Activated CD4-positive, alpha-beta T cell treated with anti-CD3 and anti-CD28 coated beads for 36 hours (primary cell): ENCODE measurements at regions of chr10 and their contacts with region 1.

Region 1: DNA sequence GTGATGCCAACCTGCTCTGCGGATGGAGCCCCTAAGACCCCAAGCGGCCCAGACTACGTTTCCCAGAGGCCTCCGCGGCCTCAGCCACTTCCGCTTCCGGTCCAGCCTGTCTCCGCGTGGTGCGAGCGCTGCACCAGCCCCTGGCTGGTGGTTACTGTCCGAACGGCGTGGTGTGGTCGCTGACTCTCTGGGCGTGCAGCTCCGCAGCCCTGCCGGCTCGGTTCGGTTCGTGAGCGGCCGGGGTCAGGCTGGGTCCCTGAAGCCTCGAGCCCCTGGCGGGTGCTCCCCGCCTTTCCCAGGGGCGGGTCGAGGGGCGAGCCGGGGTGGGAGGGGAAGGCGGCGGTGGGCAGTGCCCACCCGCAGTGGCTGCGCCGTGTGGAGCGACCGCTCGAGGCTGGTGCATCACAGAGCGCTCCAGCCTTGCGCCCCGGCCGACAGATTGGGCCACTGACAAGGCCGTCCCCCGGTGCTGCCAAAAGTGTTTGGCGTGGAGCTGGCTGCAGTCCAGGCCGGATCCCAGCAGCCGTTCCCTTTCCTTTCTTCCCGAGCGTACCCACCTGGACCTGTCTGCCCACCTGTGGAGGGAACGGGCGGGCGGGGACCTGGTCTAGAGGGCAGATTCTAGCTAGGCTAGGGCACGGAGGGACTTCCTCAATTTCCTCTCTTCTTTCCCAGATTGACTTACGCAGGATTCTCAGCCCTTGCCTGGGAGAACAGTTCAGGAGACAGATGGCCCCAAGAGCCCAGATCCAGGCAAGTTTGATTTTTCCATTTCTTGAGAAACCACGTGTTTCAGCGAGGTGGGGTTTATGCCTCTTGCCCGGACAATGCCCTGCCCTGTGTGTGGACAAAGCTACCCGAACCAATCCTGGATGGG is at the start of gene ZNF485:
- DNase-seq: peak; percentile 80
- ATAC-seq: peak; percentile 91
- H3K4me3 Mint-ChIP-seq: peak within 1 kb of the TSS; percentile 81
- H3K27ac Mint-ChIP-seq: peak within 1 kb of the TSS; percentile 82
- H3K4me1 Mint-ChIP-seq: peaks cover 40% of the 10 kb centered on the region
- H3K27me3 Mint-ChIP-seq: no peaks in the 10 kb centered on the region
- total RNA-seq, gene ZNF485: 6.9 to 7.6 TPM

Region 2: GRCh38 chr10:43594944-43595589 is 11.5 kb before region 1 on chr10:
- CTCF ChIA-PET with region 1: interaction called, 7 read pairs
- POLR2A ChIA-PET with region 1: no interaction called
- intact Hi-C with region 1: loop called in 1 of 2 experiments (anchors 1 kb)
- DNase-seq: peak; percentile 69
- ATAC-seq: peak; percentile 80
- H3K4me3 Mint-ChIP-seq: peak overlapping the region; percentile 42
- H3K27ac Mint-ChIP-seq: peak overlapping the region; percentile 76
- H3K4me1 Mint-ChIP-seq: peaks cover 26% of the 10 kb centered on the region
- H3K27me3 Mint-ChIP-seq: peaks cover 5% of the 10 kb centered on the region

Region 3: GRCh38 chr10:43623351-43623750 is 16.8 kb after region 1 on chr10:
- CTCF ChIA-PET with region 1: no interaction called
- POLR2A ChIA-PET with region 1: no interaction called
- intact Hi-C with region 1: no loop called
- DNase-seq: no peak
- ATAC-seq: no peak
- H3K4me3 Mint-ChIP-seq: peak overlapping the region; percentile 9
- H3K27ac Mint-ChIP-seq: peak overlapping the region; percentile 52
- H3K4me1 Mint-ChIP-seq: peaks cover 13% of the 10 kb centered on the region
- H3K27me3 Mint-ChIP-seq: no peaks in the 10 kb centered on the region

Region 4: GRCh38 chr10:43648398-43649184 is 42.0 kb after region 1 on chr10 and contains the start of gene ZNF32:
- CTCF ChIA-PET with region 1: interaction called, 5 read pairs
- POLR2A ChIA-PET with region 1: no interaction called
- intact Hi-C with region 1: loop called (anchors 1 to 2 kb)
- DNase-seq: peak; percentile 91
- ATAC-seq: peak; percentile 97
- H3K4me3 Mint-ChIP-seq: peak within 1 kb of the TSS; percentile 79
- H3K27ac Mint-ChIP-seq: peak within 1 kb of the TSS; percentile 88
- H3K4me1 Mint-ChIP-seq: peaks cover 14% of the 10 kb centered on the region
- H3K27me3 Mint-ChIP-seq: peaks cover 3% of the 10 kb centered on the region
- total RNA-seq, gene ZNF32: 14.1 to 15.2 TPM

Region 5: GRCh38 chr10:43671656-43672531 is 65.3 kb after region 1 on chr10:
- CTCF ChIA-PET with region 1: no interaction called
- POLR2A ChIA-PET with region 1: no interaction called
- intact Hi-C with region 1: no loop called
- DNase-seq: peak; percentile 53
- ATAC-seq: peak; percentile 75
- H3K4me3 Mint-ChIP-seq: no peak overlapping the region
- H3K27ac Mint-ChIP-seq: no peak overlapping the region
- H3K4me1 Mint-ChIP-seq: peaks cover 5% of the 10 kb centered on the region
- H3K27me3 Mint-ChIP-seq: peaks cover 33% of the 10 kb centered on the region

Region 6: DNA sequence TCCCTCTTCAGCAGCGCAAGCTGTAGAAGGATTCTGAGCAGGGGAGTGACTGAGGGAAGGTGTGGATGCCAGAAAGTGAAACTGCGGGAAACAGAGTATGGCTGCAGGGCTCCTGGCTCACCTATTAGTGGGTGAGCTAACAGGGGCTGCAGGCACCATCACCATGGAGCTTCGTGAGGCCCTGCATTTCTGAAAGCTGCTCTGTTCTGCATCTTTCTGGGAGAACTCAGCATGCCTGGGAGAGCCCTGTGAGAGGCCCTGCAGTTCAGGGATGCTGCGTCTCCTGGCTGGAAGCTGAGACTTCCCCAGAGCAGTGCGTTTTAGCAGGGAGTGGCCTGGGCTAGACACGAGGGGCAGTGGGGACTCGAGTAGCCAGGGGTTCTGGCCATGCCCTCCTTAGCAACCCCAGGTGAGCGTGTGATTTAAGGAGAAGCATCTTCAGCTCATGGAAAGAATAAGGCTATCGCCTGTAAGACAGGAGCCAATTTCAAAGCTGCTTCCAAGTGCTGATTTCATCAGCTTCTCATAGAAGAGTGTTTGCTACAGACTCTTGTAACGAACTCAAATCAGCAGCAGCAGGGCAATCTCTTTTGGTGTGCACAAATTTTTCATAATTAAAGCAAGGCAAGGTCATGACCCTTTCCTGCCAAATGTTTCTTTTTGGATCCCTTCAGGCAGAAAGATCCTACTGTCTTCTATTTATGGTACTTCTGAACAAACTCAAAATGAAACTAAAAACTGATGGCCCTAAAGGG is 335.7 kb after region 1 on chr10:
- CTCF ChIA-PET with region 1: no interaction called
- POLR2A ChIA-PET with region 1: no interaction called
- intact Hi-C with region 1: no loop called
- DNase-seq: no peak
- ATAC-seq: no peak
- H3K4me3 Mint-ChIP-seq: no peak overlapping the region
- H3K27ac Mint-ChIP-seq: no peak overlapping the region
- H3K4me1 Mint-ChIP-seq: peaks cover 13% of the 10 kb centered on the region
- H3K27me3 Mint-ChIP-seq: peaks cover 7% of the 10 kb centered on the region